GM12878 (cell line): ENCODE measurements at regions of chr3 and their contacts with region 1.

Region 1: GRCh38 chr3:37210230-37210629 is 35.8 kb upstream of the LRRFIP2 start:
- DNase-seq: no peak
- ATAC-seq: no peak
- H3K4me3 ChIP-seq: no peak overlapping the region
- H3K27ac ChIP-seq: no peak overlapping the region
- H3K4me1 ChIP-seq: no peaks in the 10 kb centered on the region
- H3K27me3 ChIP-seq: no peaks in the 10 kb centered on the region
- CTCF ChIP-seq: no peak
- EP300 ChIP-seq: no peak
- POLR2A ChIP-seq: no peak
- RAD21 ChIP-seq: no peak

Region 2: DNA sequence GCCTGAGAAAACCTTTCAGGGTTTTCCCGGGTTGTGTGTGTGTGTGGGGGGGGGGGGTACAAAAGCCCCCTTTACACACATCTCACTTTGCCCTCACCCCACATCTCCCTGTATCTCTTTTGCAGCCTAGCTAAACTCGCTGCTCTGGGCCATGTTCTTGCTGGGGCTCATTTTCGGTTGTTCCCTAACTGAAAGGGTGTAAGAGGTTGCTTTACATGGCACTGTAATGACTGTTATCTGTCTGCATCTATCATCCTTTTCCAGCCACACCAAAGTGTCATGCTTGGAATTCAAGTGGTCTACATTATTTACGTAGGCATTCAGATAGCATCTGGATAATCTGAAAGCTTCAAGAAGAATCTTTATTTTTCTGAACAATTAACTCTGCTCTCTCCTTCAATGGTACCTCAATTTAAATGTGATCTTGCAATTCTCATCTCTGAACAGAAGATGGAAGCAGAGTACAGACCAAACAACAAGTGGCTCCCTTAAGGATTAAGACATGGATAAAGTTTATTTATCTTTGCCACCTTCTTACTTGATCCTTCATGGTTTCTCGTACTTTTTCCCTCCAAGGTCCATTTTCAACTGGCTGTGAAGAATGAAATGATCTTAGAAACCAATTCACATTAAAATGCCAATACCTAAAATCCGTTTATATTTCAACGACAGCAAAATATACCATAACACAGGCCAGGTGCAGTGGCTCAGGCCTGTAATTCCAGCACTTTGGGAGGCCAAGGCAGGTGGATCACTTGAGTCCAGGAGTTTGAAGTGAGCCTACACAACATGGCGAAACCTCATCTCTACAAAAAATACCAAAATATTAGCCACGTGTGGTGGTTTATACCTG is 480.8 kb before region 1 on chr3:
- CTCF ChIA-PET with region 1: no interaction called
- POLR2A ChIA-PET with region 1: no interaction called
- RAD21 ChIA-PET with region 1: no interaction called
- SMC1A ChIA-PET with region 1: no interaction called
- in situ Hi-C with region 1: loop called (anchors 5 kb)
- intact Hi-C with region 1: loop called (anchors 1 kb)
- DNase-seq: no peak
- ATAC-seq: peak; percentile 77
- H3K4me3 ChIP-seq: no peak overlapping the region
- H3K27ac ChIP-seq: no peak overlapping the region
- H3K4me1 ChIP-seq: no peaks in the 10 kb centered on the region
- H3K27me3 ChIP-seq: no peaks in the 10 kb centered on the region
- CTCF ChIP-seq: peak; percentile 56 to 79 (median 65)
- EP300 ChIP-seq: no peak
- POLR2A ChIP-seq: no peak
- RAD21 ChIP-seq: peak; percentile 90

Region 3: GRCh38 chr3:36792342-36792741 is 417.9 kb before region 1 on chr3:
- CTCF ChIA-PET with region 1: interaction called, 3 read pairs
- POLR2A ChIA-PET with region 1: no interaction called
- RAD21 ChIA-PET with region 1: no interaction called
- SMC1A ChIA-PET with region 1: no interaction called
- in situ Hi-C with region 1: no loop called
- intact Hi-C with region 1: loop called (anchors 10 kb)
- DNase-seq: no peak
- ATAC-seq: peak; percentile 92
- H3K4me3 ChIP-seq: no peak overlapping the region
- H3K27ac ChIP-seq: no peak overlapping the region
- H3K4me1 ChIP-seq: no peaks in the 10 kb centered on the region
- H3K27me3 ChIP-seq: peaks cover 0 to 2% of the 10 kb centered on the region in 2 experiments; a peak in 1 of 4 replicates
- CTCF ChIP-seq: peak; percentile 44 to 53 (median 53); a peak in 5 of 6 replicates
- EP300 ChIP-seq: no peak
- POLR2A ChIP-seq: no peak
- RAD21 ChIP-seq: peak; percentile 72

Region 4: DNA sequence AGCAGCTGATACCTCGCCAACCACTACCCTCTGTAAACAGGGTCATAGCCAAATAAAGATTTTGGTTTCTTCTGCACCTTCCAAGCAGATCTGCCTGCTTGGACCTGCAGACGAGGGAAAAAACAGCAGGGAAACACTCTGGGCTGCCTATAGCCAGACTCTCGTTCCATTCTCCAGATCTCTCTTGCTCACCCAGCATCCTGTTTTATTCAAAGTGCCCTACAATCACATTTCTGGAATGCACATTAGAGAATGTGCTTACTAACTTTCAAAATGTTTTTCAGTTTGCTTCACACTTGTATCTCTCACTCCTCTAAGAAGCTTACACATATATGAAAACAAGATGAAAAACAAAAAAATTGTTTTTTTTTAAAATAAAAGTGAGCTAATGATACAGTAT is 145.5 kb before region 1 on chr3:
- CTCF ChIA-PET with region 1: no interaction called
- POLR2A ChIA-PET with region 1: no interaction called
- RAD21 ChIA-PET with region 1: no interaction called
- SMC1A ChIA-PET with region 1: no interaction called
- in situ Hi-C with region 1: no loop called
- intact Hi-C with region 1: loop called (anchors 5 kb)
- DNase-seq: no peak
- ATAC-seq: no peak
- H3K4me3 ChIP-seq: no peak overlapping the region
- H3K27ac ChIP-seq: no peak overlapping the region
- H3K4me1 ChIP-seq: no peaks in the 10 kb centered on the region
- H3K27me3 ChIP-seq: no peaks in the 10 kb centered on the region
- CTCF ChIP-seq: no peak
- EP300 ChIP-seq: no peak
- POLR2A ChIP-seq: no peak
- RAD21 ChIP-seq: no peak

Region 5: GRCh38 chr3:37243820-37244748 is 33.9 kb after region 1 on chr3:
- CTCF ChIA-PET with region 1: no interaction called
- POLR2A ChIA-PET with region 1: no interaction called
- RAD21 ChIA-PET with region 1: no interaction called
- SMC1A ChIA-PET with region 1: no interaction called
- in situ Hi-C with region 1: no loop called
- intact Hi-C with region 1: no loop called
- DNase-seq: no peak
- ATAC-seq: peak; percentile 65
- H3K4me3 ChIP-seq: peak overlapping the region; percentile 91
- H3K27ac ChIP-seq: peak overlapping the region; percentile 95
- H3K4me1 ChIP-seq: peaks cover 5% of the 10 kb centered on the region
- H3K27me3 ChIP-seq: no peaks in the 10 kb centered on the region
- CTCF ChIP-seq: no peak
- EP300 ChIP-seq: no peak
- POLR2A ChIP-seq: peak; percentile 40; the same call in 1 of the 2 replicates
- RAD21 ChIP-seq: no peak